Calu3 (cell line): ENCODE measurements at regions of chr20 and their contacts with region 1.

Region 1: DNA sequence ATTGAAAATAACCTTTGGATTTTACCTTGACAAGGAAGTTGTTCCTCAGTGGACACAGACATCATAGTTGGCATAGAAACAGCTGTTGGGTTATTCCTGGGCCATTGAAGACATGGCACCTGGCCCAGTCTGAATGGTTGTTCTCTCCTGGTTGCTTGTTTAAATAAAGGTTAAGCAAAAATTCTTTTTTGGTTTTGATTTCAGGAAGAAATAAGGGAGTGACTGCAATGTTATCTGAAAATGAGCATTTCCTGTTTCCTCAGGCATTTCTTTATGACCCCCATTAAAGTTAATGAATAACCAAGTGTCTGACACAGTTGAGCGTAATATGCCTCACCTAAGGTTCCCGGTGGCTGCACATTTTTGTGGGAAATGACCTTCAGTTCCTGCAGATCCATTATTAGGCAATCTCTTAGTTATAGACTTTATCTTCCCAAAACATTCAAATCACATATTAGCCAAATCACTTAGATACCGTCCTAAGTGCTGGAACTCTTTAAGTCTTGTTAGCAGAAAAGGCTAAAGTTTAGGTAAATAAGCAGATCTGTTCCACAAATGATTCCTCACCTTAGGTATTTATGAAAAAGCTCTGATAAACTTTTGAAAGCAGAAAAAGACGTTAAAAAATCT is 648.7 kb upstream of the FLRT3 start:
- DNase-seq: peak; percentile 62
- H3K4me3 Mint-ChIP-seq: no peak overlapping the region
- H3K27ac Mint-ChIP-seq: peak overlapping the region; percentile 54
- H3K4me1 Mint-ChIP-seq: peaks cover 12% of the 10 kb centered on the region
- H3K27me3 Mint-ChIP-seq: no peaks in the 10 kb centered on the region
- CTCF ChIP-seq: no peak

Region 2: DNA sequence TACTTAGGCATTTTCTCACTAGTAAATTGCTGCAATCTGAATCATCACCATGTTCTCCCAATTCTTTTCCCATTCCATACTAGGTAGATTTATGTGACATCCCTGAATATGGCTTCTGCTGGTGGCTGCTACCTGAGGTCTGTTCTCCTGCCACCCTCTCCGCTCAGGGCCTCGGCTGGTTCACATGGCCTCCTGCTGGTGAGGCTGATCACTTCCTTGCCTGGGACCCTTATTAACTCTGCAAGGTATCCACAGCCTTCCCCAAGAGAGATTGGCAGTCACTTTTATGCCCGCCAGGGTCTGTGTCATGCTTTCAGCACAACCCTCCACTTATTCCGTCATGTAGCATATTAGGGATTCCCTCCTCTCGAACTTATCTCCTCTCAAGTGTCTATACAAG is 224.2 kb before region 1 on chr20:
- CTCF ChIA-PET with region 1: no interaction called
- intact Hi-C with region 1: no loop called
- DNase-seq: no peak
- H3K4me3 Mint-ChIP-seq: no peak overlapping the region
- H3K27ac Mint-ChIP-seq: no peak overlapping the region
- H3K4me1 Mint-ChIP-seq: no peaks in the 10 kb centered on the region
- H3K27me3 Mint-ChIP-seq: no peaks in the 10 kb centered on the region
- CTCF ChIP-seq: no peak

Region 3: DNA sequence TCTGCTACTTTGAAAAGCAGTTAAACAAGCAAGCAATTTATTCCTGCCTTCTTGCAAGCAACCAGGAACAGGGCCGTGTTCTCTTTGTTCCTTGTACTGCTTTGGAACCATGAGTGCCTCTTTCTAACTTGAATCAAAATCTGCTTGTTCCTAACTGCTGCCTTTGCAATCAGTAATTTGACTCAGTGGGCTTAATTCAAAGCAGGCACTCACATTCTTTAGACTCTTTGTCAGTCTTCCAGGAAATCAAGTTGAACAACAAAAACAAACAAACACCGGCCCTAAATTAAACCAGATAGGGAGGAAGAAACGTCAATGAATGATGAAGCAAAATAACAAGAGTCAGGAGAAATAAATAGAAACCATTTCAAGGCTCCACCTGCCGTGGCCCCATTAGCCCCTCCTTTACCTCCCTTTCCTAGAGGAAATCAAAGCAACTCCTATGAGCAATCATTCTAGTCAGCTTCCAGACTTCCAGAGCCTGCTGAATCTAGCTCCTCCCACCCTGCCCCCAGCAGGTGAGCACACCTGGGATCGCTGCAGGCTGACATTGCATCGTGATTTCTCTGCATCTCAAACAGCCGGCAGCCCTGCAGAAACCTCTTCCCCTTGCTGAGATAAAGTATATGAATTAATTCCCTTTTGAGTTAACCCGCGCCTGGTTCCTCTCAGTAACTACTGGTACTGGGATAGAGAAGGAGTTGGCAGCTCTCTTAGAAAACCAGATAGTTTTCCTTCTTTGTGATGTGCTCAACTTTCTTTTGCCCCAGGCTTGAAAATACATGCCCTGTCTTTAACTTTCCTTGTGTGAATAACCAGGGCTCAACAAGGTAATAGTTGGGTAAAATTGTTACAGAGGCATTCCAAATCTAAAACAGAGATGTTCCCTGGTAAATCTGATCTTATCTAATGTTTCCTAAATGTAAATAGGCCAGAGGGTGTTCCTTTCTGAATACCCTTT is 66.4 kb before region 1 on chr20:
- CTCF ChIA-PET with region 1: no interaction called
- intact Hi-C with region 1: loop called (anchors 10 kb)
- DNase-seq: peak; percentile 24
- H3K4me3 Mint-ChIP-seq: peak overlapping the region; percentile 39
- H3K27ac Mint-ChIP-seq: peak overlapping the region; percentile 56
- H3K4me1 Mint-ChIP-seq: no peaks in the 10 kb centered on the region
- H3K27me3 Mint-ChIP-seq: no peaks in the 10 kb centered on the region
- CTCF ChIP-seq: no peak